Ascending aorta (tissue), 2 donors: ENCODE measurements at regions of chr17 and their contacts with region 1.

Region 1: DNA sequence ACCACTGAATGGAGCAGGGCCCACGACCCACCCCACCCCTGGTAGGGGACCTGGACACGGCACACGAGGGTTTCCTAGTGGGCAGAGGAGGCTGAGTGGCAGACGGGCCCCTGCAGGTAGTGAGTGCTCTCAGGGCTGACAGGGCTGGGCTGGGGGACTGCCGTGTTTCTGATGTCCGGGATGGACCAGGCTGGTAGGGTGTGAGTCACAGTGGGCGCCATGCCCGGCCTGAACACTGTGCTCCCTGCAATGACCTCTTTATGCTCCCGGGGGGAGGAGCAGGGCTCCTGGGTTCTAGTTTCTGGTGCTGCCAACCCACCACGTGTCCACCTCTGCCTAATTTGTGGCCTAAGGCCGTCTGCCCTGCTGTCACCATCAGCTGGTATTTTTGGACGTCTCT is 26.3 kb downstream of the ARHGAP23 start:
- DNase-seq: peak; percentile 71 to 94
- H3K4me3 ChIP-seq: peak overlapping the region; percentile 62 to 66
- H3K27ac ChIP-seq: peak overlapping the region; percentile 69 to 84
- H3K4me1 ChIP-seq: peaks cover 22 to 52% of the 10 kb centered on the region in 2 donors
- H3K27me3 ChIP-seq: no peaks in the 10 kb centered on the region
- CTCF ChIP-seq: no peak

Region 2: GRCh38 chr17:38444151-38444550 is 10.4 kb before region 1 on chr17:
- intact Hi-C with region 1: loop called (anchors 1 kb)
- DNase-seq: peak in 1 of 2 donors; percentile 83
- H3K4me3 ChIP-seq: no peak overlapping the region
- H3K27ac ChIP-seq: peak overlapping the region; percentile 74 to 75
- H3K4me1 ChIP-seq: peaks cover 15 to 38% of the 10 kb centered on the region in 2 donors
- H3K27me3 ChIP-seq: no peaks in the 10 kb centered on the region
- CTCF ChIP-seq: peak; percentile 86 to 89 (median 87)

Region 3: GRCh38 chr17:38464723-38465390 is 10.3 kb after region 1 on chr17:
- intact Hi-C with region 1: loop called (anchors 1 kb)
- DNase-seq: peak; percentile 67 to 96
- H3K4me3 ChIP-seq: peak overlapping the region; percentile 54 to 66
- H3K27ac ChIP-seq: peak overlapping the region; percentile 95 to 99
- H3K4me1 ChIP-seq: peaks cover 20 to 47% of the 10 kb centered on the region in 2 donors
- H3K27me3 ChIP-seq: no peaks in the 10 kb centered on the region
- CTCF ChIP-seq: no peak

Region 4: DNA sequence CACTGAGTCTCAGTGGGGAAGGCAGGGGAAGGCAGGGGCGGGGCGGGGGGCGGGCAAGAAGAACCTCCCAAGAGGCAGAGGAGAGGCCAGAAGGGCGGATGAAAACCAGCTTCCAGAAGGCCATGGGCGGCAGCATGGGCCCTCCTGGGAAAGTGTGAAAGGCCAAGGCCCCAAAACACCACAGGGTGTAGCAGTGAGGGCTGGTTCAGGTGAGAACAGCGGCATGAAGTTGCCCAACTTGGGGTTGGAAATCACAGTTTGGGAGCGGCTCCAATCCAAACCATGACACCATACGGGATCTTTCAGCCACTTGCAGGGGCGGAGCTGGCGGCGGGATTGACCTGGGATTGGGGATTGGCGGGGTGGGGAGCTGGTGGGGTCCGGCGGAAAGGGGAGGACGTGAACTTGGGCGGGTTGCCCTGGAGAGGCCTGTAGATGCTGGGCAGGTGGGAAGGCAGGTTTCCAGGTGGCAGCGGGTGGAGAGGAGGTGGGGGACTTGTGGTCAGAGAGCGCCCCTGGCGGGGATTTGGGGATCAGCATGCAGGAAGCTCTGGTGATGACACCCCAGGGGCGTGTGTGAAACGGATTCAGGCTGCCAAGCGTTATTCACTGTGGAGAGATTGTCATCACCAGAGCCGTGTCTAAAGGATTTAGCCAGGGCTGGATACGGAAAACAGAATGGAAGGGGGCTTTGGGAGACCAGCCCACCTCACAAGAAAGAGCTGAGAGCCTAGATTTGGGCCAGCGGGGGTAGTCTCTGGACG is 54.7 kb after region 1 on chr17:
- intact Hi-C with region 1: no loop called
- DNase-seq: peak in 1 of 2 donors; percentile 81
- H3K4me3 ChIP-seq: no peak overlapping the region
- H3K27ac ChIP-seq: no peak overlapping the region
- H3K4me1 ChIP-seq: no peaks in the 10 kb centered on the region
- H3K27me3 ChIP-seq: no peaks in the 10 kb centered on the region
- CTCF ChIP-seq: peak; percentile 25 to 43 (median 42)